ENCODE measurements at regions of chr2 and their contacts with region 1.

Region 1: GRCh38 chr2:69177785-69178636 is 165.0 kb downstream of the ANTXR1 start:
- DNase-seq: peak; percentile 82 to 94
- ATAC-seq: peak; percentile 84 to 85
- H3K4me3 ChIP-seq: peak overlapping the region in 3 of 4 donors; percentile 1 to 10 (median 7)
- H3K27ac ChIP-seq: peak overlapping the region; percentile 70 to 81 (median 74)
- H3K4me1 ChIP-seq: peaks cover 16% of the 10 kb centered on the region in 2 donors
- H3K27me3 ChIP-seq: no peaks in the 10 kb centered on the region
- CTCF ChIP-seq: no peak
- POLR2A ChIP-seq: peak; percentile 35 to 57

Region 2: GRCh38 chr2:69012310-69013141 is 165.5 kb before region 1 on chr2:
- in situ Hi-C with region 1: no loop called
- intact Hi-C with region 1: loop called (anchors 5 kb)
- DNase-seq: peak; percentile 19 to 28
- ATAC-seq: peak; percentile 67 to 81
- H3K4me3 ChIP-seq: peak overlapping the region; percentile 67 to 80 (median 74)
- H3K27ac ChIP-seq: peak overlapping the region; percentile 42 to 72 (median 57)
- H3K4me1 ChIP-seq: peaks cover 18 to 26% of the 10 kb centered on the region in 2 donors
- H3K27me3 ChIP-seq: peaks cover 6 to 25% (median 22%) of the 10 kb centered on the region in 3 donors
- CTCF ChIP-seq: peak; percentile 47 to 76 (median 74)
- POLR2A ChIP-seq: no peak

Region 3: GRCh38 chr2:69082430-69082997 is 95.5 kb before region 1 on chr2:
- in situ Hi-C with region 1: no loop called
- intact Hi-C with region 1: loop called (anchors 5 kb)
- DNase-seq: no peak
- ATAC-seq: no peak
- H3K4me3 ChIP-seq: no peak overlapping the region
- H3K27ac ChIP-seq: peak overlapping the region in 1 of 4 donors; percentile 14
- H3K4me1 ChIP-seq: peaks cover 17 to 20% of the 10 kb centered on the region in 2 donors
- H3K27me3 ChIP-seq: no peaks in the 10 kb centered on the region
- CTCF ChIP-seq: no peak
- POLR2A ChIP-seq: no peak

Region 4: DNA sequence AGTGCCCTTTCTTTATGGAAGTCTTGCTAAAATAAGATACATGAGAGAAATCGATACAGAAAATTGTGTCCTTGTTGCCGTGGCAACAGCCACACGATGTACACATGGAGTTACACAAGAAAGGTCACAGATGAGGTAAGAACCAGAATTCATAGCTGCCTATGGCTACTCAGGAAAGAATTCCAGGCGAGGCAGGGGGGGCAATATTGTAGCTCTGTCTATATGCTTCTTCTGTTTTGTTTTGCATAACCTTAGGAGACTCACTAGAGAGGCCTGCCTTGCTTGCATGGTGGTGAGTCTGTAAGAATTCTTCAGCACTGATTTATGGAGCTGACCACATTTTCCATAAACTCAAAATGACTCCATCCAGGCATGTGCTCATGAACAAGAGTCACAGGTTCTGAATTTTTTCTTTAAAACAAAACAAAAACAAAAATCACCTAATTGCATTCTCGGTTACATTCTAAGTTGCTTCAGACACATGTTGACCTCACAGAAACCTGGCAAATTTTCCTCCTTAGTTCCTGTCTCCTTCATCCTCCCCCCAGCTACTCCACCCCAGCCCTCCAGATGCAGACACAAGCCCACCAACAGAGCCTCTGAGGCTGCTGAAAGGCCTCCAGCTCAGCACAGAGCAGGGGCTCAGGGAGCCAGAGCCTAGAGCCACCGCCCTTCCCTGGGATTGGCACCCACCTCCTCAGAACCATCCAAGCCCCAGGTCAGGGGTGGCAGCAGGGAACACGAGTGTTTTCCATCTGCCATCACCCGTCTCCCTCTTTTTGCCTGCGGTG is 18.5 kb after region 1 on chr2:
- in situ Hi-C with region 1: no loop called
- intact Hi-C with region 1: loop called (anchors 2 kb)
- DNase-seq: no peak
- ATAC-seq: no peak
- H3K4me3 ChIP-seq: no peak overlapping the region
- H3K27ac ChIP-seq: no peak overlapping the region
- H3K4me1 ChIP-seq: peaks cover 0 to 5% of the 10 kb centered on the region in 2 donors
- H3K27me3 ChIP-seq: no peaks in the 10 kb centered on the region
- CTCF ChIP-seq: no peak
- POLR2A ChIP-seq: no peak

Region 5: DNA sequence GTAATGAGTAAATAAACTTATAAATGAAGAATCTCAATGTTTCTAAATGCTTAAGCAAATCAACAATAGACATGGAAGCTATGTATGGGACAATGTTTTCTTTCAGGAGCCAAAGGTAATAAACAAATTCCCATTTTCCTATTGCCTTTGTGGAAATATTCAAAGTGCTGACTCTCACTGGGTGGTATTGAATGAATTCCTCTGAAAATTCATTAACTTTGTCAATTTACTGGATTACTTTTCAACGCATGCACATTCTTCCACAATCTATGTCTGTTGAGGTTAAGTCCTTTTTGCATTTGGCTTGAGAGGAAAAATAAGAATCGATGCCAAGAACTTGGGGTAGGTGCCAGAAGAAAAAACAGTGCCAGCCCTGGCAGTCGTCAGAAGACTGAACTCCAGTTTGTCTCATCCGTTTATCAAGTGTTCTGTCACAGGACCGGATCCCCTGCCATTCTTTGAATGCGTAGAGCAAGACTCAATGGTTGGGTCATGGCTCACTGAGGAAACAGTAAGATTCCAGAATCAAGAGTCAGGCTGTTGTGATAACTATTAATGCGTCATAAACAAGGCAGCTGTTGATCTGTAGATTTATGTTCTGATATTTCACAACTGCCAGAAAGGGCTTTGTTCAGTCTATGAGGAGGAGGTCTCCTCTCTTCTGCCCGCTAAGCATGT is 75.7 kb after region 1 on chr2:
- in situ Hi-C with region 1: no loop called
- intact Hi-C with region 1: loop called (anchors 5 kb)
- DNase-seq: peak; percentile 15 to 43
- ATAC-seq: peak; percentile 92 to 93
- H3K4me3 ChIP-seq: no peak overlapping the region
- H3K27ac ChIP-seq: peak overlapping the region in 2 of 4 donors; percentile 26 to 33
- H3K4me1 ChIP-seq: peaks cover 0 to 3% of the 10 kb centered on the region in 2 donors
- H3K27me3 ChIP-seq: peaks cover 0 to 3% (median 0%) of the 10 kb centered on the region in 3 donors
- CTCF ChIP-seq: no peak
- POLR2A ChIP-seq: no peak